ENCODE measurements at regions of chr11 and their contacts with region 1.

Region 1: GRCh38 chr11:60906132-60906972 is at the start of gene PRPF19:
- DNase-seq: peak; percentile 47
- H3K4me3 ChIP-seq: peak within 1 kb of the TSS; percentile 85
- CTCF ChIP-seq: no peak

Region 2: GRCh38 chr11:60797846-60798630 is 108.3 kb before region 1 on chr11:
- CTCF ChIA-PET with region 1: no interaction called
- POLR2A ChIA-PET with region 1: no interaction called
- DNase-seq: no peak
- H3K4me3 ChIP-seq: no peak overlapping the region
- CTCF ChIP-seq: no peak

Region 3: DNA sequence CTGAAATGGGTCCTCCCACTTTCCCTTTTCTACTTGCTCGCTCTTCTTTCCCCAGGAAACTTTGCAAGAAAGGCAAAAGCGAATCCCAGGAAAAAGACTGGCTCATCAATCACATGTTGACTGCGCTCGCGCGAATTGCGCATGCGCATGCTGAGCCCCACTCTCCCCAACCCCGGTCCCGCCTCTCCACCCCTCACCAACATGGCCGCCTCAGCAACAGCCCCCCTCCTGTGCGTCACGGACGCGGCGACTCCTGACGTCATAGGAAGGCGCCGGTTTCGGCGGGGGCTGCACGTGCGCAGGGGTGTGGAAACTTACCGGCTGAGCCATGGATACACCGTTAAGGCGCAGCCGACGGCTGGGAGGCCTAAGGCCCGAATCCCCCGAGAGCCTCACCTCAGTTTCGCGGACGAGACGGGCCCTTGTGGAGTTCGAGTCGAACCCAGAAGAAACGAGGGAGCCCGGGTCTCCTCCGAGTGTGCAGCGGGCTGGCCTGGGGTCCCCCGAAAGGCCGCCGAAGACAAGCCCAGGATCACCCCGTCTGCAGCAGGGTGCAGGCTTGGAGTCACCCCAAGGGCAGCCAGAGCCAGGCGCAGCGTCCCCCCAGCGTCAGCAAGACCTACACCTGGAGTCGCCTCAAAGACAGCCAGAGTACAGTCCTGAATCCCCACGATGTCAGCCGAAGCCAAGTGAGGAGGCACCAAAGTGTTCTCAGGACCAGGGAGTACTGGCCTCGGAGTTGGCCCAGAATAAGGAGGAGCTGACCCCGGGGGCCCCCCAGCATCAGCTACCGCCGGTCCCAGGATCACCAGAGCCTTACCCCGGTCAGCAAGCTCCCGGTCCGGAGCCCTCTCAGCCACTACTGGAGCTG is 64.3 kb before region 1 on chr11 and contains the start of gene CCDC86:
- CTCF ChIA-PET with region 1: interaction called, 1,087 read pairs
- POLR2A ChIA-PET with region 1: no interaction called
- DNase-seq: peak; percentile 44
- H3K4me3 ChIP-seq: peak within 1 kb of the TSS; percentile 93
- CTCF ChIP-seq: no peak

Region 4: GRCh38 chr11:60887556-60887955 is 18.8 kb before region 1 on chr11:
- CTCF ChIA-PET with region 1: interaction called, 157 read pairs
- POLR2A ChIA-PET with region 1: no interaction called
- DNase-seq: no peak
- H3K4me3 ChIP-seq: no peak overlapping the region
- CTCF ChIP-seq: peak; percentile 72

Measured in AG04449 (cell line).